SK-N-SH (cell line): ENCODE measurements at regions of chr3 and their contacts with region 1.

Region 1: DNA sequence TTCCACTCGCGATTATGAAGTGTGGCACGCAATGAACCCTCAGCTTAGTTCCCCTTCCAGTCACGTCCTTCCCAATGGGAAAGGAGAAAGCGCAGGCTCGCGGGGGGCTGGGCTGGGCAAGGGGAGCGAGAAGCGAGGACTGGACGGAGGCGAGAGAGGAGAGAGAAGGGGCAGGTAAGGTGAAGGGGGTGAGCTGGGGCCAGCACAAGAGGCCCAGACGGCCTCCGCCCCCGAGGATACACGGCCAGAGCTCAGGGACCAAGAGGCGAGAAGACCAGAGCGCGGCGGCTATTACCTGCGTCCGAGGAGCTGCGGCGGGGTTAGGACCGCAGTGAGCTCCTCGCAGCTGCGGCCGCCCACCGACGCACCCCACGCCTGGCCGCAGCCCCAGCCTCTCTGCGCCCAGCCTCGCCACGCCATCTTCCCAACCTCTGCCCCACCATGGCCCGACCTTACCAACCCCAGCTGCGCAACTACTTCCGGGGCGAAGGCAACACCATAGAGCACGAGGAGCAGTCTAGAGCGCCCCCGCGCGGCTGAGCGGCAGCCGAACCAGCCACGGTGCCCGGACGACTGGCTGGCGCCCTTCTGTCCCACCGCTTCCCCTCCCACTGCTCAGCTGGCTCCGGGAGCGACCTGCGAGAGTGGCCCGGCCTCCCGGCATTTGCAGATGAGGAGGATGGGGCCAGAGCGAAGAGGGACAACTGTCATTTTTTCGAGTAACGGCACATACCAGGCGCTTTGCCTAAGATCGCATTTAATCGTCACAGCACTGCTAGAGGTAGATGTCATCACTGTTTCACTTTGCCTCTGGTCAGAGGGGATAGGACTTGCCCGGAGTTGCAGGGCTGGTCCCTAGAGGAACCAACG is at the start of gene PARL:
- DNase-seq: peak; percentile 96
- H3K4me3 ChIP-seq: peak within 1 kb of the TSS; percentile 78 to 97
- H3K27ac ChIP-seq: peak within 1 kb of the TSS; percentile 62 to 74
- H3K4me1 ChIP-seq: peaks cover 0 to 11% of the 10 kb centered on the region in 2 experiments; a peak in 2 of 4 replicates
- H3K27me3 ChIP-seq: no peaks in the 10 kb centered on the region
- CTCF ChIP-seq: peak; percentile 92
- EP300 ChIP-seq: no peak
- RAD21 ChIP-seq: peak; percentile 72
- polyA plus RNA-seq, gene PARL: 50.1 and 58.5 TPM in 2 replicates

Region 2: GRCh38 chr3:183825456-183826161 is 59.1 kb before region 1 on chr3 and contains the start of gene MAP6D1:
- CTCF ChIA-PET with region 1: interaction called, 29 read pairs
- POLR2A ChIA-PET with region 1: interaction called, 9 read pairs
- DNase-seq: peak; percentile 96
- H3K4me3 ChIP-seq: peak within 1 kb of the TSS; percentile 61
- H3K27ac ChIP-seq: 0 out of 4 replicates have a peak within 1 kb of the TSS, but pooled peaks of 1 of the 2 experiments have one; percentile 30
- H3K4me1 ChIP-seq: peaks cover 0 to 26% of the 10 kb centered on the region in 2 experiments; a peak in 2 of 4 replicates
- H3K27me3 ChIP-seq: no peaks in the 10 kb centered on the region
- CTCF ChIP-seq: peak; percentile 46
- EP300 ChIP-seq: no peak
- RAD21 ChIP-seq: peak; percentile 32
- polyA plus RNA-seq, gene MAP6D1: 2.6 and 3.4 TPM in 2 replicates

Region 3: GRCh38 chr3:183857863-183858262 is 26.8 kb before region 1 on chr3:
- CTCF ChIA-PET with region 1: interaction called, 13 read pairs
- POLR2A ChIA-PET with region 1: no interaction called
- DNase-seq: no peak
- H3K4me3 ChIP-seq: no peak overlapping the region
- H3K27ac ChIP-seq: no peak overlapping the region
- H3K4me1 ChIP-seq: no peaks in the 10 kb centered on the region
- H3K27me3 ChIP-seq: no peaks in the 10 kb centered on the region
- CTCF ChIP-seq: no peak
- EP300 ChIP-seq: no peak
- RAD21 ChIP-seq: no peak

Region 4: GRCh38 chr3:184017672-184018423 is 133.2 kb after region 1 on chr3 and contains the start of gene ABCC5:
- CTCF ChIA-PET with region 1: interaction called, 11 read pairs
- POLR2A ChIA-PET with region 1: no interaction called
- DNase-seq: peak; percentile 95
- H3K4me3 ChIP-seq: peak within 1 kb of the TSS; percentile 99 to 100
- H3K27ac ChIP-seq: peak within 1 kb of the TSS; percentile 45 to 94; a peak in 3 of 4 replicates
- H3K4me1 ChIP-seq: peaks cover 11 to 22% of the 10 kb centered on the region in 2 experiments; a peak in 3 of 4 replicates
- H3K27me3 ChIP-seq: no peaks in the 10 kb centered on the region
- CTCF ChIP-seq: no peak; the same call in 1 of the 2 replicates
- EP300 ChIP-seq: no peak
- RAD21 ChIP-seq: no peak
- polyA plus RNA-seq, gene ABCC5: 25.9 and 40.6 TPM in 2 replicates